HepG2 (cell line): ENCODE measurements at regions of chr6 and their contacts with region 1.

Region 1: GRCh38 chr6:7424967-7425807 is 35.6 kb downstream of the RIOK1 start:
- DNase-seq: peak; percentile 79
- ATAC-seq: peak; percentile 85
- H3K4me3 ChIP-seq: no peak overlapping the region
- H3K27ac ChIP-seq: no peak overlapping the region
- H3K4me1 ChIP-seq: peaks cover 24% of the 10 kb centered on the region
- H3K27me3 ChIP-seq: no peaks in the 10 kb centered on the region
- CTCF ChIP-seq: peak; percentile 87
- EP300 ChIP-seq: no peak
- POLR2A ChIP-seq: no peak
- RAD21 ChIP-seq: peak; percentile 84

Region 2: DNA sequence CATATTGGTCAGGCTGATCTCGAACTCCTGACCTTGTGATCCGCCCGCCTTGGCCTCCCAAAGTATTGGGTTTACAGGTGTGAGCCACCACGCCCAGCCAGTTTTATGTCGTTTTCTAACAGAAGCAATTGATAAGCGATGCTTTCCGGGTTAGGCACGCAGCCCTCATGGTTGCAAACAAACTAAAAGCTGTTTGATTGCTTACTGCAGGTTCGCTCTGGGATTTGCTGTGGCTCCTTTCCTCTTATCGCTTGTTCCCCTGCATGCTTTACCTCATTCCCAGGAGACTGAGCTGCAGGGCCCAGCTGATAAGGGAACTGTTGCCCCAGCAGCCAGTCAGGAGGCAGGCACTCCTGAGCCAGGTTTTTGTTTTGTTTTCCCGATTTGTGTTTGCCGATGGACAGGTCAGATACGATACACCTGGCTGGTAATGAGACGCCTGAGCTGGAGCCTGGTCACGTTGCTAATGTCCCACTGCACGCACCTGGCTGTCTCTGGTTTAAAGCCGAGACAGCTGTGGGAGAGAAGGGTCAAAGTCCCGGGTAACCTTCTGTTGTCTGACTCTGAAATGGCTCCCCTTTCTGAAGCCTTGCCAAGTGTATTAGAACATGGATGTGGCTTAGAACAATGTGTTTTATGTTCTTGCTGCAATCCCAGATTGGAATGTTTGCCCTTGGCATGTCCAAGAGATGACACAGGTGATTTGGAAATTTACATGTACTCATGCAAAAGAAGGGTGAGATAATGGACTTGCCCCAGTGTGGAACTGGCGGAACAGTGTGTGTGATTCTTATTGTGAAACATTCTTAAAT is 136.2 kb after region 1 on chr6:
- CTCF ChIA-PET with region 1: no interaction called
- POLR2A ChIA-PET with region 1: interaction called, 26 read pairs
- in situ Hi-C with region 1: no loop called
- intact Hi-C with region 1: loop called (anchors 1 kb)
- DNase-seq: peak; percentile 100
- ATAC-seq: peak; percentile 92
- H3K4me3 ChIP-seq: peak overlapping the region in 1 of 3 experiments; percentile 12; a peak in 2 of 6 replicates
- H3K27ac ChIP-seq: peak overlapping the region; percentile 78
- H3K4me1 ChIP-seq: peaks cover 62% of the 10 kb centered on the region
- H3K27me3 ChIP-seq: no peaks in the 10 kb centered on the region
- CTCF ChIP-seq: peak; percentile 22; the same call in 1 of the 2 replicates
- EP300 ChIP-seq: peak in 1 of 2 experiments; percentile 89
- POLR2A ChIP-seq: peak; percentile 31 to 60; a peak in 2 of 4 replicates
- RAD21 ChIP-seq: peak; percentile 34

Region 3: GRCh38 chr6:7580927-7581618 is 155.9 kb after region 1 on chr6:
- CTCF ChIA-PET with region 1: no interaction called
- POLR2A ChIA-PET with region 1: interaction called, 11 read pairs
- in situ Hi-C with region 1: no loop called
- intact Hi-C with region 1: no loop called
- DNase-seq: peak; percentile 80
- ATAC-seq: peak; percentile 73
- H3K4me3 ChIP-seq: peak overlapping the region in 1 of 3 experiments; percentile 35; a peak in 2 of 6 replicates
- H3K27ac ChIP-seq: peak overlapping the region; percentile 63
- H3K4me1 ChIP-seq: peaks cover 34% of the 10 kb centered on the region
- H3K27me3 ChIP-seq: no peaks in the 10 kb centered on the region
- CTCF ChIP-seq: no peak
- EP300 ChIP-seq: peak in 1 of 2 experiments; percentile 43; a peak in 1 of 4 replicates
- POLR2A ChIP-seq: peak in 1 of 2 experiments; percentile 41; a peak in 1 of 4 replicates
- RAD21 ChIP-seq: no peak

Region 4: GRCh38 chr6:7589949-7590917 is 165.0 kb after region 1 on chr6 and contains the start of gene SNRNP48:
- CTCF ChIA-PET with region 1: no interaction called
- POLR2A ChIA-PET with region 1: interaction called, 27 read pairs
- in situ Hi-C with region 1: no loop called
- intact Hi-C with region 1: loop called (anchors 2 kb)
- DNase-seq: peak; percentile 93
- ATAC-seq: peak; percentile 97
- H3K4me3 ChIP-seq: peak within 1 kb of the TSS; percentile 77 to 88 (median 86)
- H3K27ac ChIP-seq: peak within 1 kb of the TSS; percentile 64
- H3K4me1 ChIP-seq: peaks cover 34% of the 10 kb centered on the region
- H3K27me3 ChIP-seq: no peaks in the 10 kb centered on the region
- CTCF ChIP-seq: 0 out of 2 replicates have a peak, but pooled peaks have one; percentile 11
- EP300 ChIP-seq: no peak
- POLR2A ChIP-seq: peak; percentile 73 to 96; a peak in 3 of 4 replicates
- RAD21 ChIP-seq: no peak
- total RNA-seq, gene SNRNP48: 47.5 and 82.0 TPM in 2 replicates